Activated CD8-positive, alpha-beta T cell treated with anti-CD3 and anti-CD28 coated beads, Interleukin-2, amount 10 ng/mL, durations not matched to agents 7 days and 5 days (primary cell): ENCODE measurements at regions of chr16 and their contacts with region 1.

Region 1: DNA sequence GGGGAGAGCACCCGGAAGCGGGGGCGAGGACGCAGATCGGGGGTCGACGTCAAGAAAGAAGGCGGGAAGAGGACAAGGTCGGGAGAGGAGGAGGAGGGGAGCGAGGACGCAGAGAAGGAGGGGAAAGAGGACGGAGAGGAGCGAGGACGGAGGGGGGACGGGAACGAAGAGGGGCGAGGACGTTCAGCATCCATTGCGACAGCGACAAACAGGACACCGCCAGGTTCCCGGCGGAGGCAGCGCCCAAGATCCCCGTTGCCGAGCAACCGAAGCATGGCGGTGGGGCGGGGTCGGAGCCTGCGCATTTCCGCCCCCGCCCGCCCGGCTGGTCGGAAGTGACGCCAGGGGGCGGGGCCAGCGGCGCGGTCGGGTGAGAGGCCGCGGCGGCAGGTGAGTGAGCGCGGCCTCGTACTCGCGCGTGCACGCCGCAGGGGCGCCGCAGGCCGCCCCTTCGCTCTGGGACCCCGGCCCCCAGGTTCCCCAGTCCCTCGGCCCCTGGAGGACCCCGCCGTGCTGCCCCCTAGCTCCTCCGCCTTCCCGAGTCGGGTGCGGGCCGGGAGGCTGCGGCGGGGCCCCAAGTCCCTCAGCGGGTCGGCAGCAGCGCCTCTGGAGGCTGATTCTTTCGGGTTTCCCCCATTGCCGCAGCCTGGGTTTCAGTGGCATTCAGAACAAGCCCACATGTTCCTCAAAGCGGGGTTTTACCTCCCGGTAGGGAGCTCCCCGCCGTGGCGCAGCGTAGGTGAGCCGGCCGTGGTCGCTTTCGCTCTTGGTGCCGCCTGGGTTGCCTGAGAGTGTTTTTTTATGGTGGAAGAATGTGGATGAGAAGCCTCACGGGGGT is at the start of gene FAM234A:
- DNase-seq: peak; percentile 96
- ATAC-seq: peak; percentile 89
- H3K4me3 Mint-ChIP-seq: peak within 1 kb of the TSS; percentile 91
- H3K27ac Mint-ChIP-seq: peak within 1 kb of the TSS; percentile 98
- H3K4me1 Mint-ChIP-seq: peaks cover 14% of the 10 kb centered on the region
- H3K27me3 Mint-ChIP-seq: peaks cover 2% of the 10 kb centered on the region
- total RNA-seq, gene FAM234A: 10.9 to 11.8 TPM

Region 2: GRCh38 chr16:203246-203645 is 31.4 kb before region 1 on chr16:
- CTCF ChIA-PET with region 1: no interaction called
- POLR2A ChIA-PET with region 1: no interaction called
- DNase-seq: no peak
- ATAC-seq: no peak
- H3K4me3 Mint-ChIP-seq: no peak overlapping the region
- H3K27ac Mint-ChIP-seq: no peak overlapping the region
- H3K4me1 Mint-ChIP-seq: peaks cover 8% of the 10 kb centered on the region
- H3K27me3 Mint-ChIP-seq: no peaks in the 10 kb centered on the region

Region 3: GRCh38 chr16:349211-349610 is 114.5 kb after region 1 on chr16:
- CTCF ChIA-PET with region 1: interaction called, 10 read pairs
- POLR2A ChIA-PET with region 1: no interaction called
- DNase-seq: no peak
- ATAC-seq: no peak
- H3K4me3 Mint-ChIP-seq: no peak overlapping the region
- H3K27ac Mint-ChIP-seq: no peak overlapping the region
- H3K4me1 Mint-ChIP-seq: peaks cover 50% of the 10 kb centered on the region
- H3K27me3 Mint-ChIP-seq: no peaks in the 10 kb centered on the region